ENCODE measurements at regions of chr10 and their contacts with region 1.

Region 1: GRCh38 chr10:110163192-110163773 is 44.1 kb upstream of the MXI1 start:
- DNase-seq: no peak
- ATAC-seq: no peak
- H3K4me3 ChIP-seq: no peak overlapping the region
- H3K4me3 Mint-ChIP-seq: no peak overlapping the region
- H3K27ac ChIP-seq: no peak overlapping the region
- H3K27ac Mint-ChIP-seq: no peak overlapping the region
- H3K4me1 ChIP-seq: peaks cover 5 to 14% of the 10 kb centered on the region in 2 donors
- H3K4me1 Mint-ChIP-seq: peaks cover 11% of the 10 kb centered on the region
- H3K27me3 ChIP-seq: peaks cover 1 to 59% (median 25%) of the 10 kb centered on the region in 4 experiments
- H3K27me3 Mint-ChIP-seq: peaks cover 41% of the 10 kb centered on the region
- CTCF ChIP-seq: no peak

Region 2: GRCh38 chr10:110110338-110110737 is 52.9 kb before region 1 on chr10:
- CTCF ChIA-PET with region 1: no interaction called
- POLR2A ChIA-PET with region 1: no interaction called
- intact Hi-C with region 1: no loop called
- DNase-seq: no peak
- ATAC-seq: peak; percentile 71
- H3K4me3 ChIP-seq: no peak overlapping the region
- H3K4me3 Mint-ChIP-seq: peak overlapping the region; percentile 3
- H3K27ac ChIP-seq: peak overlapping the region in 1 of 2 donors; percentile 9
- H3K27ac Mint-ChIP-seq: peak overlapping the region; percentile 70
- H3K4me1 ChIP-seq: peaks cover 3 to 4% of the 10 kb centered on the region in 2 donors
- H3K4me1 Mint-ChIP-seq: peaks cover 15% of the 10 kb centered on the region
- H3K27me3 ChIP-seq: no peaks in the 10 kb centered on the region
- H3K27me3 Mint-ChIP-seq: no peaks in the 10 kb centered on the region
- CTCF ChIP-seq: no peak

Region 3: DNA sequence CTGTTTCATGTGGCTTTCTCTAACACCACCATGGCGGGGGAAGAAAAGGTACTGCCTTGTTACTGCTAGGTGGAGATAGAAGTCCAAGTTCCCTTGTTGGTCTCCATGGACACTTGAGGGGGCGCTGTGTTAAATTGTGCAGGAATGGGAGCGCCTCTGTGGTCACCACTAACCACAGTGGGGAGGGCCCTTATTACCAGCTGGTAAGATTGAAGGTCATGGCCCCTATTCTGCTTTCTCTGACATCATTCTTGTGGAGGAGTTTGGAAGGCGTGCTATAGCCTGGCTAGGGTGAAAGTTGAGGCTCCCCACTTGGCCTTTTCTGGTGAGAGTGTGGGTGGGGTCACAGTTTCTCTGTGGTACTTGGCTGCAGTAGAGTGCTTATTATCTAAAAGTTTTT is 29.3 kb after region 1 on chr10:
- CTCF ChIA-PET with region 1: no interaction called
- POLR2A ChIA-PET with region 1: interaction called, 12 read pairs
- intact Hi-C with region 1: no loop called
- DNase-seq: no peak
- ATAC-seq: no peak
- H3K4me3 ChIP-seq: no peak overlapping the region
- H3K4me3 Mint-ChIP-seq: no peak overlapping the region
- H3K27ac ChIP-seq: no peak overlapping the region
- H3K27ac Mint-ChIP-seq: no peak overlapping the region
- H3K4me1 ChIP-seq: no peaks in the 10 kb centered on the region
- H3K4me1 Mint-ChIP-seq: no peaks in the 10 kb centered on the region
- H3K27me3 ChIP-seq: peaks cover 0 to 32% (median 23%) of the 10 kb centered on the region in 4 experiments
- H3K27me3 Mint-ChIP-seq: peaks cover 59% of the 10 kb centered on the region
- CTCF ChIP-seq: no peak